ENCODE measurements at regions of chr10 and their contacts with region 1.

Region 1: GRCh38 chr10:86940677-86941076 is 16.7 kb downstream of the MMRN2 start:
- DNase-seq: peak; percentile 39
- ATAC-seq: no peak
- H3K4me3 Mint-ChIP-seq: no peak overlapping the region
- H3K27ac Mint-ChIP-seq: no peak overlapping the region
- H3K4me1 Mint-ChIP-seq: peaks cover 11% of the 10 kb centered on the region
- H3K27me3 Mint-ChIP-seq: no peaks in the 10 kb centered on the region

Region 2: DNA sequence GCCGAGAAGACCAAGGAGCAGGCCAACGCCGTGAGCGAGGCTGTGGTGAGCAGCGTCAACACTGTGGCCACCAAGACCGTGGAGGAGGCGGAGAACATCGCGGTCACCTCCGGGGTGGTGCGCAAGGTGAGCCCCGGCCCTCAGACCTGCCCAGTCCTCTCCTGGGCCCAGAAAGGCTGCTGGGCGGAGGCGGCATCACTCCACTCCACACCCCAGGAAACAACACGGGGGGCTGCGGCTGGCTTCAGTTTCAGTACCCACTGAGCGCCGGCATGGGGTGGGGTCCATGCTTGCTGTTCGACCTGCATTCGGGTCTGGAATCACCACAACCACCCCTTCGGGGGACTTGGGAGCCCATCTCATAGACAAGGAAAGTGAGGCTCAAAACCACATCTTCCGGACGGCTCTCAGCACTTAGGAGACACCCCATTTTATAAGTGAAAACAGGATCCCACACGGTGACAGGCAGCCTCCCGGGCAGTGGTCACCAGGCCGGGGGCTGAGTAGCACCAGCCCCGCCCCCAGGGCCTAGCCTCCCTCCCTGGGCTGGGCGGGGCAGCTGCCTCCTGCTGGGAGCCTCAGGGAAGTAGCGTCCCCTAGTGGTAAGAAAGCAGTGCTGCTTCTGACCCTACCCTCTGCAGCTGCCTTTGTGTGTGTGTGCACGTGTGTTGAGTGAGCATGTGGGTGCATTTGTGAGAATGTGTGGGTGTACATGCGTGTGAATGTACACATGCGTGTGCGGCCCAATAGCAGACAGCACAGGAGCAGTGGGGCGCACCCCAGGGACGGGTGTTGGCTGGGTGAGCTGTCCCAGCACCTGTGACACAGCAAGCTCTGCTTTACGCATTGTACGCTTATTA is 19.6 kb after region 1 on chr10:
- CTCF ChIA-PET with region 1: interaction called, 35 read pairs
- DNase-seq: no peak
- ATAC-seq: peak; percentile 48
- H3K4me3 Mint-ChIP-seq: no peak overlapping the region
- H3K27ac Mint-ChIP-seq: no peak overlapping the region
- H3K4me1 Mint-ChIP-seq: peaks cover 7% of the 10 kb centered on the region
- H3K27me3 Mint-ChIP-seq: no peaks in the 10 kb centered on the region

Region 3: GRCh38 chr10:86968271-86968993 is 27.8 kb after region 1 on chr10 and contains the start of gene ADIRF:
- CTCF ChIA-PET with region 1: interaction called, 35 read pairs
- DNase-seq: peak; percentile 35
- ATAC-seq: no peak
- H3K4me3 Mint-ChIP-seq: no peak within 1 kb of the TSS
- H3K27ac Mint-ChIP-seq: no peak within 1 kb of the TSS
- H3K4me1 Mint-ChIP-seq: peaks cover 33% of the 10 kb centered on the region
- H3K27me3 Mint-ChIP-seq: peaks cover 31% of the 10 kb centered on the region
- total RNA-seq, gene ADIRF: not detected